ENCODE measurements at regions of chr12 and their contacts with region 1.

Region 1: GRCh38 chr12:10749700-10750384 is 26.7 kb upstream of the YBX3 start:
- DNase-seq: peak; percentile 94
- H3K4me3 Mint-ChIP-seq: peak overlapping the region; percentile 66
- H3K27ac Mint-ChIP-seq: peak overlapping the region; percentile 79
- H3K4me1 Mint-ChIP-seq: peaks cover 6% of the 10 kb centered on the region
- H3K27me3 Mint-ChIP-seq: peaks cover 22% of the 10 kb centered on the region
- CTCF ChIP-seq: peak; percentile 82

Region 2: DNA sequence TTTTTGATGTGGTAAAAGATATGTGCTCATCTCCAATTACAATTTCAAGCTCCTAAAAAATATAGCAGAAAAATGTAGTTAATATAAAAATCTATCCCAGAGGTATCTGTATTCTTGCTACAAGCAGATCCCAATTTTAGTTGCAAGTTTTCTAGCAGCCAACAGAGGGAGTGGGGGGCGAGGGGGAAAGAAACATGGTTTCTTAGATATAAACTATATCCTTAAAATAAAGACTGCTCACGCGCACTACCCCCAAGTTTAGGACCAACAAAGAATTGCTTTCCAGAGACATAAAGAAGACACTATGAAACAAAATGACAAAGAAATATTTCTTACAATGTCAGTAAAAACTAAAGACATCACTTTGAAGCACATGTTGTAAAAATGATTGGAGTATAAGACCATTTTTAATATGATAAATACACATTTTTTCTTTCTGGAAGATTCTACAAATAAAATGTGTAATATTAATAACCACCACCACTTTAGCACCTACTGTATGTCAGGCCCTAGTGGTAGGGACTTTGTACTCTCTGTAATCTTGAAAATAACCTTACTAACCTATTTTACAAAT is 141.9 kb before region 1 on chr12:
- CTCF ChIA-PET with region 1: interaction called, 11 read pairs
- POLR2A ChIA-PET with region 1: interaction called, 7 read pairs
- intact Hi-C with region 1: loop called (anchors 2 kb)
- DNase-seq: peak; percentile 17
- H3K4me3 Mint-ChIP-seq: no peak overlapping the region
- H3K27ac Mint-ChIP-seq: no peak overlapping the region
- H3K4me1 Mint-ChIP-seq: peaks cover 14% of the 10 kb centered on the region
- H3K27me3 Mint-ChIP-seq: no peaks in the 10 kb centered on the region
- CTCF ChIP-seq: peak; percentile 23

Region 3: GRCh38 chr12:10613349-10614055 is 136.3 kb before region 1 on chr12 and contains the start of gene MAGOHB:
- CTCF ChIA-PET with region 1: interaction called, 11 read pairs
- POLR2A ChIA-PET with region 1: interaction called, 7 read pairs
- intact Hi-C with region 1: loop called (anchors 2 kb)
- DNase-seq: peak; percentile 95
- H3K4me3 Mint-ChIP-seq: peak within 1 kb of the TSS; percentile 99
- H3K27ac Mint-ChIP-seq: peak within 1 kb of the TSS; percentile 100
- H3K4me1 Mint-ChIP-seq: peaks cover 26% of the 10 kb centered on the region
- H3K27me3 Mint-ChIP-seq: no peaks in the 10 kb centered on the region
- CTCF ChIP-seq: no peak
- total RNA-seq, gene MAGOHB: 36.8 and 44.5 TPM in 2 replicates

Region 4: GRCh38 chr12:10673660-10674384 is 76.0 kb before region 1 on chr12 and contains the start of gene STYK1:
- CTCF ChIA-PET with region 1: interaction called, 4 read pairs
- POLR2A ChIA-PET with region 1: no interaction called
- intact Hi-C with region 1: loop called (anchors 1 kb)
- DNase-seq: peak; percentile 72
- H3K4me3 Mint-ChIP-seq: peak within 1 kb of the TSS; percentile 74
- H3K27ac Mint-ChIP-seq: no peak within 1 kb of the TSS
- H3K4me1 Mint-ChIP-seq: no peaks in the 10 kb centered on the region
- H3K27me3 Mint-ChIP-seq: no peaks in the 10 kb centered on the region
- CTCF ChIP-seq: peak; percentile 96
- total RNA-seq, gene STYK1: 0.14 and 0.56 TPM in 2 replicates

Region 5: GRCh38 chr12:10708862-10709261 is 41.0 kb before region 1 on chr12:
- CTCF ChIA-PET with region 1: interaction called, 11 read pairs
- POLR2A ChIA-PET with region 1: interaction called, 6 read pairs
- intact Hi-C with region 1: no loop called
- DNase-seq: no peak
- H3K4me3 Mint-ChIP-seq: no peak overlapping the region
- H3K27ac Mint-ChIP-seq: no peak overlapping the region
- H3K4me1 Mint-ChIP-seq: peaks cover 21% of the 10 kb centered on the region
- H3K27me3 Mint-ChIP-seq: no peaks in the 10 kb centered on the region
- CTCF ChIP-seq: no peak

Region 6: GRCh38 chr12:10716704-10717315 is 33.0 kb before region 1 on chr12:
- CTCF ChIA-PET with region 1: interaction called, 42 read pairs
- POLR2A ChIA-PET with region 1: interaction called, 192 read pairs
- intact Hi-C with region 1: loop called (anchors 1 kb)
- DNase-seq: peak; percentile 97
- H3K4me3 Mint-ChIP-seq: peak overlapping the region; percentile 99
- H3K27ac Mint-ChIP-seq: peak overlapping the region; percentile 98
- H3K4me1 Mint-ChIP-seq: peaks cover 46% of the 10 kb centered on the region
- H3K27me3 Mint-ChIP-seq: no peaks in the 10 kb centered on the region
- CTCF ChIP-seq: no peak

Measured in MCF 10A (cell line).